HCT116 (cell line): ENCODE measurements at regions of chr6 and their contacts with region 1.

Region 1: GRCh38 chr6:138287144-138287955 is 69.1 kb upstream of the PBOV1 start:
- DNase-seq: peak; percentile 38
- ATAC-seq: peak; percentile 81
- H3K4me3 ChIP-seq: no peak overlapping the region
- H3K27ac ChIP-seq: no peak overlapping the region
- H3K4me1 ChIP-seq: peaks cover 6 to 25% of the 10 kb centered on the region in 2 experiments
- H3K27me3 ChIP-seq: no peaks in the 10 kb centered on the region
- CTCF ChIP-seq: peak; percentile 47 to 92 (median 87); a peak in 5 of 6 replicates
- POLR2A ChIP-seq: no peak
- RAD21 ChIP-seq: peak; percentile 49; the same call in 1 of the 2 replicates

Region 2: DNA sequence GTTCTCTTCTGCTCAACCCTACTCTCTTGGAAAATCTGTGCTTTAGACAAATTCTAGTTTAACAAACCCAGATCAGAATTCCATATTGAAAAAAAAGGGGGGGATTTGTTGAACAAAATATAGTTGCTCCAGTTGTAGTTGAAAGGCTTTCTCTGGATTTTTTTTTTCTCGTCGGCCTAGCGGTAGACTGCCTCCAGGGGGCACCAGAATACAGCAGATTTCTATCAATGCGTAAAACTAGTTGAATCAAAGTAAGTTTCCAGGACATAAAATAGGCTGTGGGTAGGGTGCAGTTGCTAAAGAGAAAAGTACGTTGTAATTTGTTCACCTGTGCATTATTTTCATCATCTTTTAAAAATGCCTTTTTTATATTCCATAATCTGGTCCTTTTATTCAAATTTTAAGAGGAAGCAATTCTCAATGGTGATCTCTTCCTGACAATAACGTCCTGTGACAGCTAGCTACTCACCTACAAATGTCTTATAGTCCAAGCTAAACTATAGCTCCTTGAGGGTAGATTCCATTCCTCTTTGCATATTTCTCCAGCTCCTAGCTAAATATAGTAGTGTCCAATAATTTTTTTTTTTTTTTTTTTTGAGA is 285.5 kb before region 1 on chr6:
- CTCF ChIA-PET with region 1: no interaction called
- POLR2A ChIA-PET with region 1: no interaction called
- RAD21 ChIA-PET with region 1: no interaction called
- intact Hi-C with region 1: loop called (anchors 5 kb)
- DNase-seq: peak; percentile 48
- ATAC-seq: peak; percentile 52; the same call in 1 of the 2 replicates
- H3K4me3 ChIP-seq: no peak overlapping the region
- H3K27ac ChIP-seq: no peak overlapping the region
- H3K4me1 ChIP-seq: peaks cover 0 to 10% of the 10 kb centered on the region in 2 experiments; a peak in 3 of 4 replicates
- H3K27me3 ChIP-seq: no peaks in the 10 kb centered on the region
- CTCF ChIP-seq: peak; percentile 86 to 95 (median 92)
- POLR2A ChIP-seq: no peak
- RAD21 ChIP-seq: peak; percentile 95

Region 3: DNA sequence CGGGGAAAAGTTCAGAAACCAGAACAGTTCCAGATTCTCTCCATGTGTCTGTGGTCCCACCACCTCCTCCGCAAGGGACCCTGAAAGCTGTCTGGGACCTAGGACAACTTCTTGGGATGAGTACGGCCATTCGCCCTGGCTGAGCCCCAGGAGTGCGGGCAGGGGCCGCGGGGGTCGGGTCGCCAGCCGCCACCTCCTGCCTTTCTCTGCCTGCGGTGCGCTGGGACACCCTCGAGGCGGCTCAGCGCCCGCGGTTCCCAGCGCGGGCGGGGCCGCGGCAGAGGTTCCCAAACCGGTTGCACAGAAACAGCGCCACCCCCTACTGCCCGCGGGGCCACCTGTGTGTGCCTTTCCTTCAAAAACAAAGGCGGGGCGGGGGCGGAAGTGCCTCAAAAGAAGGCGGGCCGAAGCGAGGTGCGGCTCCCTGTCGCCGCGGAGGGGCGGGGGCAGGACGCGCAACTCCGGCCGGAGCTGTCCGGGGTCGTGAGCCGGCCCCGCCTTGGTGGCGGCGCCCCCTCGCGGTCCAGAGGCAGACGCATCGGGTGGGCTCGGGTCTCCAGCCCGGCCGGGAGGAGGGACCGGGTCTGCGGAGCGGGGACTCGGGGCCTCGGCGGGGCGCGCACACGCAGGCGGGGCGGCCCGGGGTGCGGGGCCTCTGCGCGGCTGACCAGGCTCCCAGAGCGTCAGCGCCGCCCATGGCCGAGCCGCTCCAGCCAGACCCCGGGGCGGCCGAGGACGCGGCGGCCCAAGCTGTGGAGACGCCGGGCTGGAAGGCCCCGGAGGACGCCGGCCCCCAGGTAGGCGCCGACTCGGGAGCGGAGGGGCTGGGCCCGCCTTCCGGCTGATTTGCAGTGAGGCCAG is 116.7 kb after region 1 on chr6 and contains the start of gene HEBP2:
- CTCF ChIA-PET with region 1: interaction called, 5 read pairs
- POLR2A ChIA-PET with region 1: no interaction called
- RAD21 ChIA-PET with region 1: no interaction called
- intact Hi-C with region 1: loop called (anchors 2 kb)
- DNase-seq: peak; percentile 89
- ATAC-seq: peak; percentile 93
- H3K4me3 ChIP-seq: peak within 1 kb of the TSS; percentile 77 to 84
- H3K27ac ChIP-seq: peak within 1 kb of the TSS; percentile 80
- H3K4me1 ChIP-seq: peaks cover 8 to 20% of the 10 kb centered on the region in 2 experiments; a peak in 3 of 4 replicates
- H3K27me3 ChIP-seq: no peaks in the 10 kb centered on the region
- CTCF ChIP-seq: peak; percentile 54 to 57 (median 54)
- POLR2A ChIP-seq: peak; percentile 39
- RAD21 ChIP-seq: peak; percentile 72
- total RNA-seq, gene HEBP2: 51.6 TPM

Region 4: DNA sequence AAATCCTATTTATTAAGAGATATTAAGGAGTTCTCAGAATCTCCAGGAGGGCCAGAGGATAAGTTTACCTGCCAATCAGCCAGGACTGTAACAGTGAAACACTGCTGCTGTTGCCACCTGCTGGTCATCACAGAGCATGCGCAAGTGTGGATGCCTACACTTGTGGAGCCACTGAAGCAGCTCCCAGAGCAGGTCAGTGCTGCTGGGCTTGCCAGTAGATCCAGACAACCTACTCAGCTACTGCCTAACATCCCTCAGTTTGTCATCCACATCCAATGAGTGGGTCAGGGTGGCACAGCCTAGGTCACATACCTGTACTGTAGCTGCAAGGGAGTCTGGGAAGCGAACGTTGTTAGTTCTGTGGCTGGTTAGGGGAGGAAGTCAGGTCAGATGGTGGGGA is 230.3 kb after region 1 on chr6:
- CTCF ChIA-PET with region 1: no interaction called
- POLR2A ChIA-PET with region 1: no interaction called
- RAD21 ChIA-PET with region 1: no interaction called
- intact Hi-C with region 1: loop called (anchors 10 kb)
- DNase-seq: peak; percentile 39
- ATAC-seq: peak; percentile 92
- H3K4me3 ChIP-seq: no peak overlapping the region
- H3K27ac ChIP-seq: no peak overlapping the region
- H3K4me1 ChIP-seq: no peaks in the 10 kb centered on the region
- H3K27me3 ChIP-seq: no peaks in the 10 kb centered on the region
- CTCF ChIP-seq: peak; percentile 27 to 80 (median 76); a peak in 5 of 6 replicates
- POLR2A ChIP-seq: no peak
- RAD21 ChIP-seq: peak; percentile 50; the same call in 1 of the 2 replicates